ENCODE measurements at regions of chr17 and their contacts with region 1.

Region 1: DNA sequence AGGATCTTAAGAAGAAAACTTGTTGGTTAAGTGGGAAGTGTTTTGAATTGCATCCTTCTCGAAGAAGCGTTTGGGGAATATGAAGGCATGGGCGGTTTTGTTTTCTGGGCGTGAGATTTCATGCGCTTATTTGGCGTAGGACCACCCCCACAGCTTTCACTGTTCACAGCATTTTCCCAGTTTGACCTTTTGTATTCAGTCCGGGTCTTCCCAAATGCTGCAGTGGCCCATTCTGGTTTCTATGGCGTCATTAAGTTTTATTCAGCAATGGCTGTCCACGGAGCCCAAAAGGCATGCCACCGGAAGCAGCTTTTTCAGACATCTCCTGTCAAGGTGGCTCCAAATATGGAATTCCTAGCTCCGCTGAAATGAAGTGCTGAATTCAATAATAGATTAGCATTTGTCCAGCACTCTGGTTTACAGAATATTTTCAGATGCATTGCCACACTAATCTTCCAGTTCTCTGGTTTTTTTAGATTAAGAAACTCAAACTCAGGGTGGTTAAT is 90.6 kb upstream of the FBXO47 start:
- DNase-seq: no peak
- ATAC-seq: no peak

Region 2: DNA sequence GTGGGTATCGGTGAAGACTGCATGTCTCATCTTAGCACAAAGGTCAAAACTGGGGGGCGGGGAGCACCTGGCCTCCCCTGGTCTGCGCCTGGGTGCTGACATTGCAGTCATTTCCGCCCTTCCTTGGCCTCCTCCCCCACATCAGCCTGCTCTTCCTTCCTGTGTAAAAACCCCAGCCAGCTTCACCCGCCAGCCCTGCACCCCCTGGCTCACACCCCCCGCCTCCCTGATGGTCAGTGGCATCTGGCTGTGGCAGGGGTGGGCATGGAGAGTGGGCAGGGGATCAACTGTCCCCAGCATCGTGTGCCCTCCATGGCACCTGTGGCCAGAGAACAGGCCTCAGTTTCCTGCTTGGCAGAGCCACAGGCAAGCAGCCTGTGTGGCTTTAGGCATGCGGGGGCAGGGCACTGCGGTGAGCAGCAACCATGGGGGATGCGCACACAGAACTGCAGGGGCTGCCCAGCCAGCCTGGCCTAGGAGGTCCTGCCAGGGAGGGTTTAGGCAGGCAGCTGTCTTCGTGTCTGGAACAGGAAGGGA is 158.9 kb before region 1 on chr17:
- intact Hi-C with region 1: no loop called
- DNase-seq: peak; percentile 75
- ATAC-seq: no peak

Region 3: DNA sequence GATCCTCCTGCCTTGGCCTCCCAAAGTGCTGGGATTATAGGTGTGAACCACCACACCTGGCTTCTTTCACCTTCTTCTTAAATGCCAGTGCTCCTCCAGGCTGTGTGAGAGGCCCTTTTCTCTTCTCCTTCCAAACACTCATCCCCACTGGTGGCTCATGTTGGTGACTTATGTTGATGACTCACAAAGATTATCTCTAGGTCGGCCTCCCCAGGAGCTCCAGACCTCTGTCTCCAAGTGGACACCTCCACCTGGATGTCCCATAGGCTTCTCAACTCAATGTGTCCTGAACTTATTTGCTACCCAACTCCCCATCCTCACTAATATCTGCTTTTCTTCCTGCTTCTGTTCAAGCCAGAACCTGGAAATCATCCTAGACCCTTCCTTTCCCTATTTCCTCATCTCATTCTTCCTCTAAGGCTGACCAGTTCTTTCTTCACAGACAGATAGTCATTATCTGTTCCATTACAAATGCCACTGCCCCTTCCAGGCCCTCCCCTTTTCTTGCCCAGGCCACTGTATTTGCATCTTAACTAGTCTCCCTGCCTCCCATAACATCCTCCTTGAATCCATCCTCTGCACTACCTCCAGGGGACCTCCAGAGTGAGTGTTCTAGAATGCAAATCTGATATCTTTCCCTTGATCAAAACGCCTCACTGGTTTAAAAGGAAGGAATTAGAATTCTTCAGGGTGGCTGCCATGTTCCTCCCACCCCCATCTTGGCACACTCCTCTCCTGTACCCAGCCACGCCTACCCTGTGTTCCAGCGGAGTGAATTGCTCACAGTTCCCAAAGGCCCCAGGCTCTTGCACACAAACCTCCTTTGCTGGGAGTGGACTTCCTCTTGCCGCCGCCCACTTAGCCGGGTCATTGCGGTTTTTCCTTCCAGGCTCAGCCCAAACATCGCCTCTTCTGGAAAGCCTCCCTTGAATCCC is 55.8 kb before region 1 on chr17:
- intact Hi-C with region 1: loop called (anchors 5 kb)
- DNase-seq: peak; percentile 90
- ATAC-seq: peak; percentile 93

Measured in Right ventricle myocardium inferior (tissue), 1 donor.